Spleen (tissue), 13 donors: ENCODE measurements at regions of chr17 and their contacts with region 1.

Region 1: DNA sequence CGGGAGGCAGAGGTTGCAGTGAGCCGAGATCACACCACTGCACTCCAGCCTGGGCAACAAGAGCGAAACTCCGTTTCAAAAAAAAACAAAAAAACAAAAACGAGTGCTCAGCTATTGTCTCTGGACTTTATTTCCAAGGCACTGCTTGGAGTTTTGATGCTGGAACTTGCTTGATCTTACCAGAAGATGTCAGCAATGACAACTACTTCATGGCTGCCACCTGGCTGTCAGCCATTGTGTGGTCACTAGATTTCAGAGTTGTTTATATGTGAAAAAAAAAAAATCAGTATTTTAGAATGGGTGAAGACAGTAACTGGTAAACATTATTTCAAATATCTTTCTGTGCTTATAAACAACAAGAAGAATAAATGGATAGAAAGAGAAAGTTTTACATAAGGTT is 26.3 kb upstream of the OR4D1 start:
- DNase-seq: no peak
- H3K4me3 ChIP-seq: no peak overlapping the region
- H3K27ac ChIP-seq: no peak overlapping the region
- H3K4me1 ChIP-seq: no peaks in the 10 kb centered on the region
- H3K27me3 ChIP-seq: peaks cover 0 to 34% (median 0%) of the 10 kb centered on the region in 7 donors
- CTCF ChIP-seq: peak in 9 of 11 experiments; percentile 17 to 55 (median 32)
- POLR2A ChIP-seq: no peak

Region 2: GRCh38 chr17:58172369-58173071 is 50.6 kb after region 1 on chr17:
- intact Hi-C with region 1: loop called (anchors 5 kb)
- DNase-seq: no peak
- H3K4me3 ChIP-seq: no peak overlapping the region
- H3K27ac ChIP-seq: peak overlapping the region in 2 of 8 donors; percentile 16 to 82
- H3K4me1 ChIP-seq: peaks cover 0 to 27% (median 5%) of the 10 kb centered on the region in 6 donors
- H3K27me3 ChIP-seq: peaks cover 0 to 22% (median 8%) of the 10 kb centered on the region in 7 donors
- CTCF ChIP-seq: peak; percentile 31 to 72 (median 55)
- POLR2A ChIP-seq: no peak